ENCODE measurements at regions of chr11 and their contacts with region 1.

Region 1: GRCh38 chr11:58097437-58097836 is 27.9 kb downstream of the OR9I1 start:
- DNase-seq: no peak
- ATAC-seq: no peak
- H3K4me3 ChIP-seq: no peak overlapping the region
- H3K27ac ChIP-seq: no peak overlapping the region
- H3K4me1 ChIP-seq: no peaks in the 10 kb centered on the region
- H3K27me3 ChIP-seq: no peaks in the 10 kb centered on the region
- CTCF ChIP-seq: no peak
- POLR2A ChIP-seq: no peak

Region 2: GRCh38 chr11:58121096-58121495 is 23.7 kb after region 1 on chr11:
- intact Hi-C with region 1: no loop called
- DNase-seq: no peak
- ATAC-seq: no peak
- H3K4me3 ChIP-seq: no peak overlapping the region
- H3K27ac ChIP-seq: no peak overlapping the region
- H3K4me1 ChIP-seq: no peaks in the 10 kb centered on the region
- H3K27me3 ChIP-seq: peaks cover 0 to under 1% (median 0%) of the 10 kb centered on the region in 9 donors
- CTCF ChIP-seq: no peak
- POLR2A ChIP-seq: no peak

Region 3: GRCh38 chr11:58165504-58166106 is 68.2 kb after region 1 on chr11:
- intact Hi-C with region 1: loop called in 1 of 10 experiments (anchors 10 kb)
- DNase-seq: no peak
- ATAC-seq: no peak
- H3K4me3 ChIP-seq: no peak overlapping the region
- H3K27ac ChIP-seq: no peak overlapping the region
- H3K4me1 ChIP-seq: no peaks in the 10 kb centered on the region
- H3K27me3 ChIP-seq: no peaks in the 10 kb centered on the region
- CTCF ChIP-seq: no peak
- POLR2A ChIP-seq: no peak

Region 4: DNA sequence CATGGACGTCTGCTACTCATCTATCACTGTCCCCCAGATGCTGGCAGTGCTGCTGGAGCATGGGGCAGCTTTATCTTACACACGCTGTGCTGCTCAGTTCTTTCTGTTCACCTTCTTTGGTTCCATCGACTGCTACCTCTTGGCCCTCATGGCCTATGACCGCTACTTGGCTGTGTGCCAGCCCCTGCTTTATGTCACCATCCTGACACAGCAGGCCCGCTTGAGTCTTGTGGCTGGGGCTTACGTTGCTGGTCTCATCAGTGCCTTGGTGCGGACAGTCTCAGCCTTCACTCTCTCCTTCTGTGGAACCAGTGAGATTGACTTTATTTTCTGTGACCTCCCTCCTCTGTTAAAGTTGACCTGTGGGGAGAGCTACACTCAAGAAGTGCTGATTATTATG is 82.2 kb after region 1 on chr11:
- intact Hi-C with region 1: no loop called
- DNase-seq: peak in 2 of 5 donors; percentile 26 to 44
- ATAC-seq: no peak
- H3K4me3 ChIP-seq: no peak overlapping the region
- H3K27ac ChIP-seq: no peak overlapping the region
- H3K4me1 ChIP-seq: no peaks in the 10 kb centered on the region
- H3K27me3 ChIP-seq: no peaks in the 10 kb centered on the region
- CTCF ChIP-seq: no peak
- POLR2A ChIP-seq: no peak

Measured in heart left ventricle (tissue), 16 donors.